ENCODE measurements at regions of chr3 and their contacts with region 1.

Region 1: DNA sequence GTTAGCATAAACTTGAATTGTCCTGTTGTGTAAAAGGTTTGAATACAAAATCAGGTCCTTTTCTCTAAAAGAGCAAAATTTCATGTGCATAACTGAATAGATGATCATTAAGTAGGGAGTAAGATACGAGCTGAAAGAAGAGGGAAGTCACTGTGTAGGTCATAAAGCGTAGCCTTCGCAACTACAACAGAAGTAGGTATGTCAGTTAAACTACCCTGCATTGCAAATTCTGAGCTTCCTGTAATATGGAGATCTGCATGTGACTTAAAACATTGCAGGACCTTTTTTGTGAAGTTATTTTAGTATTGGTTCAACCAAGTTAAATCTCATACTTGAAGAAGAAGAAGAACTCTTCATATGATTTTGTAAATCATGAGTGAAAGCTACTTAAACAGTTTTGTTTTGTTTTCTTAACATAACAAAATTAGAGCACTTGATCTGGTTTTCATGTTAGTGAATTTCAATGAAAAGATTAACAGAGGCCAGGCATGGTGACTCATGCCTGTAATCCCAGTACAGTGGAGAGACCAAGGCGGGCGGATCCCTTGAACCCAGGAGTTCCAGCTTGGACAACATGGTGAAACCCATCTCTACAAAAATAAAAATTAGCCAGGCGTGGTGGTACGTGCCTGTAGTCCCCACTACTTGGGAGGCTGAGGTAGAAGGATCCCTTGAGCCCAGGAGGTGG is 26.4 kb downstream of the ARMC8 start:
- DNase-seq: no peak
- H3K4me3 ChIP-seq: no peak overlapping the region
- H3K27ac ChIP-seq: no peak overlapping the region
- H3K4me1 ChIP-seq: no peaks in the 10 kb centered on the region
- H3K27me3 ChIP-seq: no peaks in the 10 kb centered on the region
- CTCF ChIP-seq: no peak

Region 2: DNA sequence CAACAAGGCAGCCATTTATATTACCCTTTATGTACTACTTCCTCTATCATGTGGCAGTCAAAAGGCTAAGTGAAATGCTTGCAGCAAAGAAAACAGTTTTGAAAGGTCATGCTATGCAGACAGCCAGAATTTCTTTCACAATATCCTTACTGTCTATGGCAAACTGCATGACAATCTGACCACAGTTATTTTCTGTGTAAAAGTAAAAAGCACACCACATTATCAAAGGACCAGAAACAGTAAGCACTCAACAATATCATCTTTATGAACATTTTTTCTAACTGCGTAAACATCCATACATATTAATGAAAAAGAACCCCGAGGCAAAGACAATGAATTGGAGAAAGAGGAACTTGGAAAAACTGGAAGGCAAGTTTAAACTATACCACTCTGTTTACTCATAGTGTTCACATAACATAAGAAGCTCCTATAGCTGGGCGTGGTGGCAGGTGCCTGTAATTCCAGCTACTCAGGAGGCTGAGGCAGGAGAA is 573.3 kb after region 1 on chr3:
- CTCF ChIA-PET with region 1: interaction called, 17 read pairs
- POLR2A ChIA-PET with region 1: no interaction called
- intact Hi-C with region 1: no loop called
- DNase-seq: peak in 1 of 2 experiments; percentile 47
- H3K4me3 ChIP-seq: no peak overlapping the region
- H3K27ac ChIP-seq: peak overlapping the region; percentile 39; the same call in 1 of the 2 replicates
- H3K4me1 ChIP-seq: no peaks in the 10 kb centered on the region
- H3K27me3 ChIP-seq: no peaks in the 10 kb centered on the region
- CTCF ChIP-seq: no peak